Keratinocyte (primary cell): ENCODE measurements at regions of chr22 and their contacts with region 1.

Region 1: DNA sequence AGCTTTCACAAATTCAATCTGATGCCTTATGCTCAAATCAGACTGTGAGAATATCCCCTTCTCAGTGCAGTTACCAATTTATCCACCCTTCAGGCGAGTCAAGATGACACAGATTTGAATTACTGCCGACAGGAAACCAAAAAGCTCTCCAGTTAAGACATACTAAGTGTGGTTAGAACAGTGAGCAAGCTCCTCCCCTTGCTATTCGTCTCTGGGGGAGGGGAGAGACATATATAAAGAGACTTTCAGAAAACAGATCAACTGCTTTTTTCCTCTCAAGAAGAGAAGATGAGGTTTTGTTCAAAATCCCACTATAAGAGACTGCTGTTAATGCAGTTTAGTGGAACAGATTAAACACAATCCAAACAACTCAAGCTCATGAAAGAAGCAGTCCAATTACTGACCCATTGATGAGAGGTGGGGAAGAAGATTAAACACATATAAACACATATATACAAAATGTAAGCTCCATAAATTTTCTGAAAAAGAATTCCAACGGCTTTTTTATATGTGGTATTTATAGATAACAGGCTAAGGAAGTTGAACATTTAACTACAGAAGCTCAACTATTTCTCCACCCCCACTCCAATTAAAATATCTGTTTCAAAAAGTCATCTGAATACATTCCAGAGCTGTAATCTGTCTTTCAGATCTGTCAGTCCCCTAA is 102.7 kb downstream of the MRTFA start:
- DNase-seq: no peak
- H3K4me3 ChIP-seq: peak overlapping the region in 2 of 3 experiments; percentile 40 to 42
- H3K27ac ChIP-seq: peak overlapping the region; percentile 69
- H3K4me1 ChIP-seq: peaks cover 40% of the 10 kb centered on the region
- H3K27me3 ChIP-seq: no peaks in the 10 kb centered on the region
- CTCF ChIP-seq: no peak

Region 2: GRCh38 chr22:40463017-40463631 is 70.7 kb before region 1 on chr22:
- dilution Hi-C with region 1: no loop called
- DNase-seq: no peak
- H3K4me3 ChIP-seq: no peak overlapping the region
- H3K27ac ChIP-seq: no peak overlapping the region
- H3K4me1 ChIP-seq: no peaks in the 10 kb centered on the region
- H3K27me3 ChIP-seq: no peaks in the 10 kb centered on the region
- CTCF ChIP-seq: no peak

Region 3: GRCh38 chr22:40636380-40637182 is 102.7 kb after region 1 on chr22 and contains the start of gene MRTFA:
- dilution Hi-C with region 1: loop called (anchors 25 kb)
- DNase-seq: peak; percentile 98
- H3K4me3 ChIP-seq: peak within 1 kb of the TSS; percentile 85 to 96 (median 95)
- H3K27ac ChIP-seq: peak within 1 kb of the TSS; percentile 88
- H3K4me1 ChIP-seq: peaks cover 22% of the 10 kb centered on the region
- H3K27me3 ChIP-seq: no peaks in the 10 kb centered on the region
- CTCF ChIP-seq: no peak
- polyA plus RNA-seq, gene MRTFA: 5.6 to 14.3 TPM (median 6.5 TPM) in 3 replicates